AG04449 (cell line): ENCODE measurements at regions of chrX and their contacts with region 1.

Region 1: DNA sequence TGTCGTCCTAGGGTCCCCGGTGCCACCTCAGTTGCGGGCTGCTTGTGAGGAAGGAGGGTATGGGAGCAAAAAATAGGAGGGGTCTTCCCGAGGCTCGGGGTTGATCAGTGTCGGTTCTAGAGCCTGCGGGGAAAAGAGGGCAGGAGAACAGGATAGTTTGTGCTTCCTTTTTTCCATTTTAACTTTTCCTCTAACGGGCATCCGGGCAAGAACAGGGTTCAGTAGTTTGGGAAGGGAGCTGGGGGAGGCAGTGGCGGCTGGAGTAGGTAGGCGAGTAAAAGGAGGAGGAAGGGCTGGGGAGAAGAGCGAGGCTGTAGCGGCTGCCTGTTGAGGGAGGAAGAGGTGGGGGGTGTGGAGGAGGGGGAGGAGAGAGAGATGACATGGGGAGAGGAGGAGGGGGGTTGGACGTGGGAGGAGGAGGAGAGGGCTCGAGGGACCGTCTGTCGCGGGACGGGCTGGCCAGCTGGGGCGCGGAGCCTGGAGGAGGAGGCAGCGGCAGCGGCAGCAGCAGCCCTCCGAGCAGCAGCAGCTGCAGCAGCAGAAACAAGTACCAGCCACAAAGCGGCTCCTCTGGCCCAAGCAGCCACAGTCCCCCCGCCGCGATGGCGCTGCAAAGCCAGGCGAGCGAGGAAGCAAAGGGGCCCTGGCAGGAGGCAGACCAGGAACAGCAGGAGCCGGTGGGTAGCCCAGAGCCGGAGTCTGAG is at the start of gene SLC16A2:
- DNase-seq: no peak
- H3K4me3 ChIP-seq: peak within 1 kb of the TSS; percentile 63
- CTCF ChIP-seq: no peak

Region 2: DNA sequence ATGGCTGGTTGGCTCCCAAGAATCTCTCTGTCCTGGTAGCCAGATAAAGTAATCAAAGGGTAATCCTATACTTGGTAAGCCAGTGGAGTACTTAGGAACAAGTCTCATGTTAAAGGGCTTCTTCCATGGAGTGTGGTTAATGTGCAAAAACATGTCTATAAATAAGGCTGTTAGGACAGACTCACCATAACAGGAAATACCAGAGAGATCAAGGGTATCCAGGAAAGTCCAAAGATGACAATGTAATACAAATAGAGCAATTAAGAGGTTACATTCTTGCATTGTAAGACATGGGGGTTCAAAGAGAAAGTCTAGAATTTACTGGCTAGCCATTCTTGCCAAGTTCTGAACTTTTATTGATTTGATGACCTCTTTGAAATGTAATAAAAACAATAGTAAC is 179.1 kb before region 1 on chrX:
- CTCF ChIA-PET with region 1: no interaction called
- POLR2A ChIA-PET with region 1: no interaction called
- DNase-seq: peak; percentile 12
- H3K4me3 ChIP-seq: no peak overlapping the region
- CTCF ChIP-seq: no peak

Region 3: GRCh38 chrX:74408304-74408703 is 12.9 kb before region 1 on chrX:
- CTCF ChIA-PET with region 1: no interaction called
- POLR2A ChIA-PET with region 1: no interaction called
- DNase-seq: no peak
- H3K4me3 ChIP-seq: no peak overlapping the region
- CTCF ChIP-seq: no peak

Region 4: GRCh38 chrX:74450803-74451449 is 29.7 kb after region 1 on chrX:
- CTCF ChIA-PET with region 1: interaction called, 6 read pairs
- POLR2A ChIA-PET with region 1: interaction called, 10 read pairs
- DNase-seq: peak; percentile 83
- H3K4me3 ChIP-seq: no peak overlapping the region
- CTCF ChIP-seq: no peak